ENCODE measurements at regions of chr16 and their contacts with region 1.

Region 1: GRCh38 chr16:11201498-11202259 is 54.3 kb downstream of the SOCS1 start:
- DNase-seq: peak; percentile 93
- H3K4me3 ChIP-seq: peak overlapping the region in 2 of 3 experiments; percentile 54 to 61
- H3K27ac ChIP-seq: peak overlapping the region; percentile 98
- H3K4me1 ChIP-seq: peaks cover 47% of the 10 kb centered on the region
- H3K27me3 ChIP-seq: no peaks in the 10 kb centered on the region
- CTCF ChIP-seq: no peak

Region 2: GRCh38 chr16:11356573-11357331 is 155.1 kb after region 1 on chr16:
- dilution Hi-C with region 1: loop called (anchors 10 kb)
- DNase-seq: no peak
- H3K4me3 ChIP-seq: peak overlapping the region in 1 of 3 experiments; percentile 5
- H3K27ac ChIP-seq: peak overlapping the region; percentile 86
- H3K4me1 ChIP-seq: peaks cover 34% of the 10 kb centered on the region
- H3K27me3 ChIP-seq: no peaks in the 10 kb centered on the region
- CTCF ChIP-seq: peak; percentile 19 to 59 (median 30)